G401 (cell line): ENCODE measurements at regions of chr1 and their contacts with region 1.

Region 1: DNA sequence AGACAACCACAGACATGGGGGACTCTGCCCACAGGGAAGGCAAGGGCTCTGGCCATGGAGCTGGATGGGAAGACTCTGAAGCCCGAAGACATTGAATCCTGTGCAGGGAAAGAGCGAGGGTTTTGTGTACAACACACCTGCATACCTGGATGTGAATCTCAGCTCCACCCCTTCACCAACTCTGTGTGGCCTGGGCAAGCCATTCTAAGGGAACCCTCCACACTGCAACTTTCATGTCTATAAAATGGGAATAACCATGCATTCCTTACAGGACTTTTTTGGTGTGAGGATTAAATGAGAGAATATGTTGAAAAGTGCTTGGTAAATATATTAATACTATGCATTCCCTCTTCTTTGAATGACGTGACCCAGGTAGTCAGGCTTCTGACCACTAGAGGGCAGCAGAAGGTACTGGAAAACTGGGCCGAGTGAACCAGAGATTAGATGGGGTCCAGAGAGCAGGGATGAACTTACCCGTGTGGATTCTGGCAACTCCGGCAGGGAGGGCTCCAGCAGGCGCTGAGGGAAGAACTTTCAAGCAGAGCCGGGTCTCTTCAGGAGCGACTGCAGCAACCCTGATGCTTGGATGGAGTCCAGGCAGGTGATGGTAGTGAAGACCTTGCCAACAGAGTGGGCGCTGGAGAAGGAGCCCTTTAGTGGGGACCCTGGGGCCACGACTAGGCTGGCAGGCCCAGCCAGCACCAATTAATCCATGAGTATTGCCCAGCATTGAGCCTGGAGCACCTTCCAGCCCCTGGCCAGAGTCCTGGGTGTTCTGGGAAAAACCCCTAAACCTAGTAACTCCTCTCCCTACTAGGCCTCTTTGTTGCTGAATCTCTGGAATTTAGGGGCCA is 834 bp upstream of the ELF3 start:
- DNase-seq: peak; percentile 88

Region 2: DNA sequence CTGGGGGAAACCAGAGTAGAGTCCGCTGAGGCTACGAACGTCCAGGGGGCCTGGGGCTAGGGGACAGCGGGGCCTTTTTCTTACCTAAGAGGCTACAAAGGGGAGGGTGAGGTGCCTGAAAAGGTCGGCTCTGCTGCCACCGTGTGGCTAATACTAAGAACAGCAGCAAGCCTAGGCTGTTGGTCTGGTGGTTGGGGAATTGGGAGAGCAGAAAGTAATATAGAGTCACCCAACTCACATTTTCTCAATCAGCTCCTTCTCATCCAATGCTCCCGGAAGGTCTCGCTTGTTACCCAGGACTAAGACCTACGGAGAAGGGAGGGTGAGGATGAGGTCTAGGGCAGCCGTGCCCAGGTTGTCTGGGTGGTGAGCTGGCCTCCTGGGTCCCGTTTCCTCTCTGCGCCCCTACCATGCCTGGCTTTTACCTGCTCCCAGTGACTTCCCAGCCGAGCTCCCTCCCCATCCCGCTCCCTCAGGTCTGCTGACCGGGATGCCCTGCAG is 125.7 kb after region 1 on chr1:
- in situ Hi-C with region 1: loop called (anchors 25 kb)
- DNase-seq: peak; percentile 88